Aorta (tissue), 5 donors: ENCODE measurements at regions of chr20 and their contacts with region 1.

Region 1: DNA sequence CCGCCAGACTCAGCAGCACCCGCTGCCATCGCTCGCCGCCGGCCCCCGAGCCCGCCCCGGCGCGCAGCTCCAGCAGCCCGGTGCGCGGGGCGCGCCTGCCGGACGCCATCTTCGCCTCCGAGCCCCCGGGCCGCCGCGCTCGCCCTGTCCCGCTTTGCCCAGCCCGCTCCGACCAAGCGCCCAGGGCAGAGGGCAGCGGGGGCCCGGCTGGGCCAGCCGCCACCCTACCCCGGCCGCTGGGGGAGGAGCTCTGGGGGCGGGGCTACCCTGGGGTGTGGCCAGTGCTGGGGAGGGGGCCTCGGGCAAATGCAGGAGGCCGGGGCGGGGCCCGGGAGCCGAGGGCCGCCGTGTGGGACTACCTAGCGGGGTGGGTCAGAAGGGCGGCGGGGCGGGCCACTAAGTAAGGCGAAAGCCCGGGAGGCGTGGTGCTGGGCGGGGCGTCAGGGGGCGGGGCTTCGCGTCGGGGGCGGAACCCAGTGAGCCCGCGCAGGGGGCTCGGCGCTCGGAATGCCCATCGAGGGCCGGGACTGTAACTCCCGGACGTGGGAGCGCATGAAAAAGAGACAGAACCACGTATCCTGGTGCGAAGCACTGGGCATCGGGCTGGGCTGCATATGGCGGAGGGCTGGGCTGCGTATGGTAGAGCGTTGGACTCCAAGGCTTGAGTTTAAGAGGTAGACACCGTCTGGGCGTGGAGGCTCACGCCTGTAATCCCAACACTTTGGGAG is at the start of gene SNTA1:
- DNase-seq: peak; percentile 96 to 97
- ATAC-seq: peak; percentile 95
- H3K4me3 ChIP-seq: peak within 1 kb of the TSS; percentile 54 to 84
- H3K27ac ChIP-seq: peak within 1 kb of the TSS; percentile 46 to 73
- H3K4me1 ChIP-seq: peaks cover 0 to 2% of the 10 kb centered on the region in 2 donors
- H3K27me3 ChIP-seq: no peaks in the 10 kb centered on the region
- total RNA-seq, gene SNTA1: 37.5 to 43.2 TPM

Region 2: DNA sequence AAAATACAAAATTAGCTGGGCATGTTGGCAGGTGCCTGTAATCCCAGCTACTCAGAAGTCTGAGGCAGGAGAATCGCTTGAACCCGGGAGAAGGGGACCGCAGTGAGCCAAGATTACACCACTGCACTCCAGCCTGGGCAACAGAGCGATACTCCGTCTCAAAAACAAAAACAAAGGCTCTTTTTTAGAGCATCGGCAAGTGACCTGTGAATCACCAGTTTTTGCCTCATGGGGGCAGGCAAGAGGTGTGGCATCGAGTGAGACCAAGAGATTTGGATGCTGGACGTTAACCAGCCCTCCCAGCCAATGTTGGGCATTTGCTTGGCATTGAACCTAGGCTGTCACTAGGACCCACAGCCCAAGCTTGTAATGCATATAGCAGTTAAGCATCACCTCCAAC is 27.7 kb before region 1 on chr20:
- intact Hi-C with region 1: loop called in 1 of 2 experiments (anchors 2 kb)
- DNase-seq: peak; percentile 57 to 81
- ATAC-seq: peak; percentile 31
- H3K4me3 ChIP-seq: no peak overlapping the region
- H3K27ac ChIP-seq: no peak overlapping the region
- H3K4me1 ChIP-seq: peaks cover 0 to 2% of the 10 kb centered on the region in 2 donors
- H3K27me3 ChIP-seq: no peaks in the 10 kb centered on the region

Region 3: DNA sequence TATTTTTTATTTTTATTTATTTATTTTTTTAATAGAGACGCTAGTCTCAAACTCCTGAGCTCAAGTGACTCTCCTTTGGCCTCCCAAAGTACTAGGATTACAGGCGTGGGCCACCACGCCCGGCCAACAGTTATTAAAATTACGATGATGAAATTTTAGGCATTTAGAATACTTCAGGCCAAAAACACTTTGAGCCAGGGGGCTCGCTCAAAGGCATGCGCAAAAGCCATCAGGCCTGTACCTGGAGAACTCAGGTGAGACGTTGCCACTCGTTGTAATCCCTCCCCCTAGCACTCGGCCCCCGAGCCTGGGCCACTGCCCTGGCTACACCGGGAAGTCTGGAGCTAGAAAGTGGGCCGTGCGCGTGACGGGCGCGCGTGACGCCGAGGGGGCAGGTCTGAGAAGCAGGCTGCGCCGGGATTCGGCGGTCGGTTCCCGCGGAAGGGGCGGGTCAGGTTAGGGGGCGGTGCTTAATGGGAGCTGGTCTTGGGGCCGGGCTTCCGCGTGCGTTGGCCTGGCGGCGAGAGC is 45.9 kb after region 1 on chr20:
- intact Hi-C with region 1: loop called in 1 of 2 experiments (anchors 5 kb)
- DNase-seq: peak; percentile 100
- ATAC-seq: peak; percentile 99
- H3K4me3 ChIP-seq: peak overlapping the region in 1 of 2 donors; percentile 76
- H3K27ac ChIP-seq: peak overlapping the region in 1 of 2 donors; percentile 75
- H3K4me1 ChIP-seq: peaks cover 0 to 3% of the 10 kb centered on the region in 2 donors
- H3K27me3 ChIP-seq: no peaks in the 10 kb centered on the region

Region 4: DNA sequence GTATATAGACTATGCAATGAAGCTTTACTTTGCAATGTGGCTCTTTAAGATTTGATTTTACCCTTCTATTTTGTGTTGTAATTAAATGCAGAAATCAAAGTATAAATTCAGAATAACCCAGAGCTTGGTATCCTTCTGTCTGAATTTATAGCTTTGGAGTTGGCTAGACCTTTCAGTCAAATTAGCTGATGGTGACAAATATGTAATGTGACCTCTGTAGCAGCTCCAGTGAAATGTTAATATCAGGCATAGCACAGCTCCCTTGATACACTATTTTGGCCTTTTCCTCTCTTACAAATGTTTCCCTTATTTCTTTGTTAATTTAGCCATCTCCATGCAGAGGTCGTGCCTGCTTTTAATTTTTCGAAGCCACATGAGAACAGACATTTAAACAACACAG is 57.3 kb after region 1 on chr20:
- intact Hi-C with region 1: no loop called
- DNase-seq: no peak
- ATAC-seq: no peak
- H3K4me3 ChIP-seq: no peak overlapping the region
- H3K27ac ChIP-seq: no peak overlapping the region
- H3K4me1 ChIP-seq: no peaks in the 10 kb centered on the region
- H3K27me3 ChIP-seq: no peaks in the 10 kb centered on the region

Region 5: GRCh38 chr20:33515569-33516216 is 72.0 kb after region 1 on chr20:
- intact Hi-C with region 1: no loop called
- DNase-seq: no peak
- ATAC-seq: no peak
- H3K4me3 ChIP-seq: no peak overlapping the region
- H3K27ac ChIP-seq: no peak overlapping the region
- H3K4me1 ChIP-seq: no peaks in the 10 kb centered on the region
- H3K27me3 ChIP-seq: no peaks in the 10 kb centered on the region

Region 6: DNA sequence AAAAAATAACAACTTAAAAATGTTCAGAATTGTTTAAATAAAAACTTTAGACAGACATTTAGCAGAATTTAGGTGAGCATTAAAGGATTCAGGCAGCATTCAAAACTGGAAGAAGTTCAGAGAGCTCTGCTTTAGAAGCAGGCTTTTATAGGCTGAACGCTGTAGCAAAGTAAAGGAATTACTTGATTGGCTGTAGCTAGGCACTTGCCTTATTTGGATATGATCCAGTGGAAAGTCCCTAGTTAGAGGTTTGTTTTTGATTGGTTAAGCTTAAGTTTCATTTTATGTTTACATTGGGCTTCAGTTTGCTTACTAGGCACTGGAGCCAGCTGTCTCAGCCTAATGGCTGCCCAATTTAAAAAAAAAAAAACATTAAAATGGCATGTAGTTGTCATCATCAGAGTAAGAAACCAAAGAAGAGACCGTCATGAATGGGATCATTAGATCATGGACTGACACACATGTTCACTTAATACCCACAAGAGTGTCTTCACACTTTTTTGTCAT is 111.3 kb after region 1 on chr20:
- intact Hi-C with region 1: loop called in 1 of 2 experiments (anchors 10 kb)
- DNase-seq: no peak
- ATAC-seq: peak; percentile 76
- H3K4me3 ChIP-seq: peak overlapping the region in 1 of 2 donors; percentile 54
- H3K27ac ChIP-seq: no peak overlapping the region
- H3K4me1 ChIP-seq: no peaks in the 10 kb centered on the region
- H3K27me3 ChIP-seq: no peaks in the 10 kb centered on the region

Region 7: DNA sequence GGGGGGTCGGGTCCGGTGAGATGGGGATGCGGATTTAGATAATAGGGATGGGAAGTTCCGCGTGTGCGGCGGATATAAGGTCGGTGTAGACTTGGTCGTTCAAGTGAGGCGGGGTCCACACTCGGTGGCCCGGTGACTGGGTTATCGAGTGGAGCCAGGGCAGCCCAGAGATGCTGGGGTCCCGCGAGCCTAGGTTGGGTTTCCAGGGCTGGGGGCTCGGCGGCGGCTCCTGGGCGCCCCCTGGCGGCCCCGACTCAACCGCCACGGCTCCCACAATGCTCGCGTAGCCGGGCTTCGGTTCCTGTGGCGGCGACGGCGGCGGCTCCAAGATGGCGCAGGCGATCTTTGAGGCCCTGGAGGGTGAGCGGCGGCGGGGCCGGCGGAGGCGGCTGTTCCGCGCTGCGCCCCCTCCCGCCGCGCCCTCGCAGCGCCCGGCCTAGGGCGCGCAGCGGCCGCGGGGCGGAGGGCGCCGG is 288.1 kb after region 1 on chr20 and contains the start of gene ZNF341:
- intact Hi-C with region 1: loop called in 1 of 2 experiments (anchors 10 kb)
- DNase-seq: peak; percentile 93 to 96
- ATAC-seq: peak; percentile 94
- H3K4me3 ChIP-seq: peak within 1 kb of the TSS; percentile 23 to 40
- H3K27ac ChIP-seq: peak within 1 kb of the TSS; percentile 12 to 84
- H3K4me1 ChIP-seq: no peaks in the 10 kb centered on the region
- H3K27me3 ChIP-seq: no peaks in the 10 kb centered on the region
- total RNA-seq, gene ZNF341: 2.1 to 3.1 TPM